ENCODE measurements at regions of chr1 and their contacts with region 1.

Region 1: GRCh38 chr1:84944767-84945486 is 51.9 kb upstream of the LPAR3 start:
- DNase-seq: peak; percentile 49 to 74 (median 58)
- ATAC-seq: peak; percentile 87 to 98 (median 96)
- H3K4me3 ChIP-seq: peak overlapping the region in 11 of 12 donors; percentile 6 to 62 (median 46)
- H3K27ac ChIP-seq: peak overlapping the region in 11 of 12 donors; percentile 2 to 85 (median 50)
- H3K4me1 ChIP-seq: peaks cover 0 to 10% (median 0%) of the 10 kb centered on the region in 12 donors
- H3K27me3 ChIP-seq: peaks cover 0 to 6% (median 0%) of the 10 kb centered on the region in 9 donors
- CTCF ChIP-seq: peak; percentile 84 to 97 (median 92)
- POLR2A ChIP-seq: no peak

Region 2: DNA sequence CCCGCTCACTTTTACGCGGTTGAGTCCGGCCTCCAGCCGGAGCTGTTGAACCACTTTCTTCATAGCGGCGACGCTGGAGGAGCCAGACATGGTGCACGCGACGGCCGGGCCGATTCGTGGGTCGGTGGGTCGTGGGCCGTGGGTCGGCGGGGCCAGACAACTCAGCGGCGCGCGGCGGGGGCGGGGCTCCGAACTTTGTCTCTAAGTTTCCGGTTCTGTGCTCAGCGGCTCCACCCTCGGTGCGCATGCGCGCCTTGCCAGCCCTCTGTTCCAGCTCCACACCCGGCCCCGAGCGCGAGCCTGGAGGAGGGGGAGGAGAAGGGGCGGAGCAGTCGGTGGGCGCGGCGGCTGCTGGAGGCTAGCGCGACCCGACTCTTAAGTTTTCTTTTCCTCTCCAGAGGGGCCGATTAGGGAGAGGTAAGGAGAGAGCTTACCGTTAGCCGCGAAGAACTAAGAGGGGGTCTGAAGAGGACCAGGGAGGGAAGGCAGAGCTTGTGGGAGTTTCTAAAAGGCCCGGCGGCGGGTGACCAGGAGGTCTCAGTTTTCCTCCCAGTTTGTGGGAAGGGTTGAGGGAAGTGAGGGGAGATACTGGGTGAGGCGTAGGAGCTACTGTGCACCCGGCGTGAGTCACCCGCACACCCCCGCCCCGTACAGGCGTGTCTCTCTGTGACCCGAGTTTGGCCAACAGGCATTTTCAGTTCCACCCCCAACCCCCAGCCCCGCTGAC is 438.8 kb before region 1 on chr1 and contains the starts of genes GNG5 and SPATA1:
- intact Hi-C with region 1: no loop called
- DNase-seq: peak; percentile 99 to 100 (median 99)
- ATAC-seq: peak; percentile 96 to 98 (median 98)
- H3K4me3 ChIP-seq: peak within 1 kb of the TSS; percentile 47 to 91 (median 82)
- H3K27ac ChIP-seq: peak within 1 kb of the TSS; percentile 89 to 99 (median 96)
- H3K4me1 ChIP-seq: peaks cover 0 to 51% (median 32%) of the 10 kb centered on the region in 12 donors
- H3K27me3 ChIP-seq: no peaks in the 10 kb centered on the region
- CTCF ChIP-seq: peak in 1 of 12 donors; percentile 7
- POLR2A ChIP-seq: peak in 1 of 2 donors; percentile 72
- total RNA-seq, gene GNG5: 129 to 217 (median 160) TPM
- total RNA-seq, gene SPATA1: 0.82 to 2.0 (median 1.2) TPM in 8 of 9 donors, not detected in the other

Region 3: GRCh38 chr1:84632137-84632536 is 312.8 kb before region 1 on chr1:
- intact Hi-C with region 1: no loop called
- DNase-seq: peak in 1 of 5 donors; percentile 25
- ATAC-seq: peak in 2 of 4 donors; percentile 36 to 53
- H3K4me3 ChIP-seq: no peak overlapping the region
- H3K27ac ChIP-seq: no peak overlapping the region
- H3K4me1 ChIP-seq: peaks cover 0 to 9% (median 0%) of the 10 kb centered on the region in 12 donors
- H3K27me3 ChIP-seq: no peaks in the 10 kb centered on the region
- CTCF ChIP-seq: no peak
- POLR2A ChIP-seq: no peak

Region 4: GRCh38 chr1:85027242-85027983 is 82.5 kb after region 1 on chr1:
- intact Hi-C with region 1: loop called in 9 of 10 experiments (anchors 1 to 5 kb)
- DNase-seq: no peak
- ATAC-seq: peak in 3 of 4 donors; percentile 41 to 64 (median 58)
- H3K4me3 ChIP-seq: no peak overlapping the region
- H3K27ac ChIP-seq: no peak overlapping the region
- H3K4me1 ChIP-seq: no peaks in the 10 kb centered on the region
- H3K27me3 ChIP-seq: no peaks in the 10 kb centered on the region
- CTCF ChIP-seq: peak in 2 of 12 donors; percentile 8 to 13
- POLR2A ChIP-seq: no peak

Region 5: GRCh38 chr1:85078903-85079302 is 134.0 kb after region 1 on chr1:
- intact Hi-C with region 1: loop called in 1 of 10 experiments (anchors 10 kb)
- DNase-seq: no peak
- ATAC-seq: no peak
- H3K4me3 ChIP-seq: no peak overlapping the region
- H3K27ac ChIP-seq: no peak overlapping the region
- H3K4me1 ChIP-seq: no peaks in the 10 kb centered on the region
- H3K27me3 ChIP-seq: no peaks in the 10 kb centered on the region
- CTCF ChIP-seq: peak in 2 of 12 donors; percentile 22 to 23
- POLR2A ChIP-seq: no peak

Region 6: GRCh38 chr1:85091671-85092280 is 146.8 kb after region 1 on chr1:
- intact Hi-C with region 1: loop called in 1 of 10 experiments (anchors 10 kb)
- DNase-seq: no peak
- ATAC-seq: no peak
- H3K4me3 ChIP-seq: peak overlapping the region in 1 of 12 donors; percentile 6
- H3K27ac ChIP-seq: no peak overlapping the region
- H3K4me1 ChIP-seq: peaks cover 0 to 8% (median 0%) of the 10 kb centered on the region in 12 donors
- H3K27me3 ChIP-seq: peaks cover 0 to 4% (median 0%) of the 10 kb centered on the region in 9 donors
- CTCF ChIP-seq: no peak
- POLR2A ChIP-seq: no peak

Region 7: DNA sequence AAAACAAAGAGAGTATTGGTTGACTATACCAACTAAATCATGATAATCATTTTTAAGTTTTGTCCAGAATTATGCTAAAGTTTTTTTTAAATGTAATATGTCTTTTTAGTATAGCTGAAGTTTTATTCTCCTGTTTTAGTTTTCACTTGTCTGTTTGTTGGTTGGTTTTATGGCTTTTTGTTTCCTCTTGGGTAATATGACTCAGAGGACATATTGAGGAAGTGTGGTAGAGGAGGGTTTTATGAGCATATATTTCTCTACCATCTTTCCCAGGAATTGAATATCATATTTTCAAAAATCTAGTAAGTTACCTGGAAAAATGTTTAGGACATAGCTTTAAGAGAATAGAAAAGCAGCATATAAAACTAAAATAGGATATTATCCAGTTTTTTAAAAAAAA is 171.9 kb after region 1 on chr1:
- intact Hi-C with region 1: loop called in 1 of 10 experiments (anchors 10 kb)
- DNase-seq: no peak
- ATAC-seq: no peak
- H3K4me3 ChIP-seq: no peak overlapping the region
- H3K27ac ChIP-seq: no peak overlapping the region
- H3K4me1 ChIP-seq: peaks cover 0 to 4% (median 0%) of the 10 kb centered on the region in 12 donors
- H3K27me3 ChIP-seq: no peaks in the 10 kb centered on the region
- CTCF ChIP-seq: no peak
- POLR2A ChIP-seq: no peak

Region 8: GRCh38 chr1:85240174-85240601 is 295.3 kb after region 1 on chr1:
- intact Hi-C with region 1: loop called in 1 of 10 experiments (anchors 5 kb)
- DNase-seq: peak in 1 of 5 donors; percentile 32
- ATAC-seq: peak in 2 of 4 donors; percentile 43 to 78
- H3K4me3 ChIP-seq: no peak overlapping the region
- H3K27ac ChIP-seq: peak overlapping the region in 1 of 12 donors; percentile 46
- H3K4me1 ChIP-seq: peaks cover 0 to 15% (median 0%) of the 10 kb centered on the region in 12 donors
- H3K27me3 ChIP-seq: no peaks in the 10 kb centered on the region
- CTCF ChIP-seq: peak in 5 of 12 donors; percentile 15 to 35 (median 29)
- POLR2A ChIP-seq: no peak

Region 9: DNA sequence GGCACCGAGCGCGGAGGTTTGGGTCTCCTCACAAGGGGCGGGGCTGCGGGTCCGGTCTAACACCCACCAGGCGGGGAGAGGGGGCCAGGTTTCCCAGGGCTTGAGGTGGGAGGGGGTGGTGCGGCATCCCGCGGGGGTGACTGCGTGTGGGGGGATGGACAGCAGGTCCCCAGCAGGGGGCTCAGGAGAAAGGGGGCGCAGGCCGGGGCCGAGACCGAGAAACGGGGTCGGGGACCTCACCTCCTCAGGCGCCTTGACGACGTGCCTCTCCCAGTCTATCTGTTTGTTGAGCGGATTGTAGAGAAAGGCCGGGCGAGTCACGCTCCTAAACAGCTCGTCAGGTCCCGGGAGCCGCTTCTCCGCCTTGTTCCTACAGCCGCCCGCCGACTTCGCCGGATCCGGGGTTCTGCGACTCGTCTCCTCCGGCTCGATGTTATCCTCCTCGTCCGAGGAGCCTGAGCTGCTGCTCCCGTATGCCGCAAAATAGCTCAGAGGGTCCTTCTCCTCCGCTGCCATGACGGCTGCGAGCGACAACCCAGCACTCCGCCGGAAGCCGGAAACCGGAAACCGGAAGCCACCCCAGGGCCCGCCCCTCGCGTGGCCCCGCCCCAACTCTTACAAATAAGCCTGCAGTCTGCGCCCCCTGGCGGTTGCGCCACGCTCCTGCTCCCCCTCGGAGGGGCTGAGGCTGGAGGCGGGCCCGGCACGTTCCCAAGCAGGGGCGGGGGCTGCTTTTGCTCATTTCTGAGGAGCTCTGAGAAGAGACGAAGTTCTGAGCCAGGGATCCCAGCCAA is 314.4 kb after region 1 on chr1 and contains the start of gene C1orf52:
- intact Hi-C with region 1: loop called (anchors 1 to 5 kb)
- DNase-seq: peak; percentile 95 to 98 (median 96)
- ATAC-seq: peak; percentile 97 to 98 (median 98)
- H3K4me3 ChIP-seq: peak within 1 kb of the TSS; percentile 66 to 98 (median 88)
- H3K27ac ChIP-seq: peak within 1 kb of the TSS; percentile 80 to 96 (median 88)
- H3K4me1 ChIP-seq: peaks cover 0 to 40% (median 33%) of the 10 kb centered on the region in 12 donors
- H3K27me3 ChIP-seq: no peaks in the 10 kb centered on the region
- CTCF ChIP-seq: peak; percentile 96 to 100 (median 99)
- POLR2A ChIP-seq: peak in 1 of 2 donors; percentile 68
- total RNA-seq, gene C1orf52: 11.4 to 23.2 (median 17.0) TPM

Measured in heart left ventricle (tissue), 16 donors.